T-cell (primary cell): ENCODE measurements at regions of chr3 and their contacts with region 1.

Region 1: DNA sequence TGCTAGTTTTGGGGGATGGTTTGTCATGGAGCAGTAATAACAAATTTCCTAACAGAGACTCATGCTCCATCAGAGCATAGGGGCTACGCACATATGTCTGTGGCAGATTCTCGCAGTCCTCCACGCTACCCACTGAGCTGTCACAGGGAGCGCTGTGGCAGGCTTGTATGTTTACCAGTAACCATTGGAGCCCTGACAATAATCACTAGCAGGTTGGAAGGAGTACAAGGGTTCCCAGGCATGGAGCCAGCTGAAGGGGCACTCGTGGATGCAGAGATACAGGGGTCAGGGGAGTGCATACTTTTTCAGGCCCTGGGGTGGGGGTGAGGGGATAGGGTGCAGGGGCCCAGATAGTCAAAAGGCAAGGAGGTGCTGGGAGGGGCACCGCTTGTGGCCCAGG is 7.9 kb upstream of the GP9 start:
- DNase-seq: no peak
- ATAC-seq: no peak
- H3K4me3 ChIP-seq: no peak overlapping the region
- H3K4me3 Mint-ChIP-seq: peak overlapping the region in 1 of 3 donors; percentile 47
- H3K27ac ChIP-seq: no peak overlapping the region
- H3K27ac Mint-ChIP-seq: no peak overlapping the region
- H3K4me1 ChIP-seq: peaks cover 0 to 5% of the 10 kb centered on the region in 2 experiments
- H3K4me1 Mint-ChIP-seq: peaks cover 5 to 12% (median 11%) of the 10 kb centered on the region in 3 donors
- H3K27me3 ChIP-seq: peaks cover 0 to 3% of the 10 kb centered on the region in 2 experiments
- H3K27me3 Mint-ChIP-seq: no peaks in the 10 kb centered on the region

Region 2: GRCh38 chr3:129016356-129016719 is 36.3 kb before region 1 on chr3:
- CTCF ChIA-PET with region 1: interaction called, 3 to 17 read pairs
- POLR2A ChIA-PET with region 1: no interaction called
- DNase-seq: peak; percentile 42 to 85 (median 62)
- ATAC-seq: peak; percentile 80 to 91 (median 84)
- H3K4me3 ChIP-seq: peak overlapping the region in 1 of 2 donors; percentile 32
- H3K4me3 Mint-ChIP-seq: peak overlapping the region; percentile 50 to 81 (median 72)
- H3K27ac ChIP-seq: peak overlapping the region; percentile 84
- H3K27ac Mint-ChIP-seq: peak overlapping the region; percentile 95 to 99
- H3K4me1 ChIP-seq: peaks cover 26 to 43% of the 10 kb centered on the region in 2 experiments
- H3K4me1 Mint-ChIP-seq: peaks cover 46 to 61% (median 47%) of the 10 kb centered on the region in 3 donors
- H3K27me3 ChIP-seq: no peaks in the 10 kb centered on the region
- H3K27me3 Mint-ChIP-seq: no peaks in the 10 kb centered on the region

Region 3: DNA sequence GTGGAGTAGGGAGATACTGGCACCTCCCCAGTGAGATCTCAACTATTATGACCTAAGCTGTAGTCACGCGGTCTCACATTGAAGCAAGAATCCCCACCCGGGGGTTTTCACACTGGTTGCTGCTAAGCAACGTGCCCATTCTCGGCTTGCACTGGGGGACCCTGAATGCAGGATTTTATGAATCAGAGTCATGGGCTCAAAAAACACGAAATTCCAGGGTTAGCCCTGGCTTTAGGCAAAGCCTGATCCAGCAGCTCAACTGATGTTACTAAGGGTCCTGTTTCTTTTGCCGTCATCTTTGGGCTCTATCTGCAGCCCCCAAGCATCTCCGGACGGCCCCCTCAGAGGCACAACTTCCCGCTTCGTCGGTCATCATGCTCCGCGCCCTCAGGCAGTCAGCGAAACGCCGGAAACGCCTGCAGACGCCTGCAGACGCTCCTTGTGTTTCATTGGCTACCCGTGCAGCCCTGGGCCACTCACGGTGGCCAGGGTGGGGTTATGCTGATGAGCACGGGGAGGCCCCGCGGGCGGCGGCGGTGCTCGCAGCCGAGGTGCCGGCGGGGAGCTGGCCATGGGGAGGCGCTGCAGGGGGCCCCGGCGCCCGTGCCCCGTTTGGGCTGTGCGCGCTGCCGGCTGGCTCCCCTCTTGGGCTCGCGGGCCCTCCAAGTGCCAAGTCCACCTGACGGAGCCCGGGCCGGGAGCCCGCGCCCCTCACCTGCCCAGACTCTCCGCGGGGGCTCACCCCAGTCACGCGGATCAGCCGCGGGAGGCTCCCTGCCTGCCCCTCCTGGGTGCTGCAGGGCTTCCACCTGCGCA is 25.7 kb before region 1 on chr3:
- CTCF ChIA-PET with region 1: interaction called in 1 of 2 experiments, 12 read pairs
- POLR2A ChIA-PET with region 1: interaction called, 4 read pairs
- DNase-seq: peak; percentile 80 to 96 (median 92)
- ATAC-seq: peak; percentile 97 to 100 (median 100)
- H3K4me3 ChIP-seq: peak overlapping the region; percentile 47 to 65
- H3K4me3 Mint-ChIP-seq: peak overlapping the region; percentile 79 to 80 (median 79)
- H3K27ac ChIP-seq: peak overlapping the region; percentile 82
- H3K27ac Mint-ChIP-seq: peak overlapping the region; percentile 94 to 96
- H3K4me1 ChIP-seq: peaks cover 5 to 30% of the 10 kb centered on the region in 2 experiments
- H3K4me1 Mint-ChIP-seq: peaks cover 20 to 29% (median 24%) of the 10 kb centered on the region in 3 donors
- H3K27me3 ChIP-seq: no peaks in the 10 kb centered on the region
- H3K27me3 Mint-ChIP-seq: no peaks in the 10 kb centered on the region

Region 4: GRCh38 chr3:129036222-129037092 is 16.2 kb before region 1 on chr3:
- CTCF ChIA-PET with region 1: interaction called in 1 of 2 experiments, 13 read pairs
- POLR2A ChIA-PET with region 1: interaction called in 1 of 2 experiments, 3 read pairs
- DNase-seq: no peak
- ATAC-seq: peak in 1 of 4 experiments; percentile 21
- H3K4me3 ChIP-seq: no peak overlapping the region
- H3K4me3 Mint-ChIP-seq: no peak overlapping the region
- H3K27ac ChIP-seq: no peak overlapping the region
- H3K27ac Mint-ChIP-seq: peak overlapping the region in 1 of 2 donors; percentile 61
- H3K4me1 ChIP-seq: peaks cover 9 to 25% of the 10 kb centered on the region in 2 experiments
- H3K4me1 Mint-ChIP-seq: peaks cover 19 to 31% (median 21%) of the 10 kb centered on the region in 3 donors
- H3K27me3 ChIP-seq: peaks cover 0 to 27% of the 10 kb centered on the region in 2 experiments
- H3K27me3 Mint-ChIP-seq: peaks cover 6 to 15% of the 10 kb centered on the region in 2 donors

Region 5: DNA sequence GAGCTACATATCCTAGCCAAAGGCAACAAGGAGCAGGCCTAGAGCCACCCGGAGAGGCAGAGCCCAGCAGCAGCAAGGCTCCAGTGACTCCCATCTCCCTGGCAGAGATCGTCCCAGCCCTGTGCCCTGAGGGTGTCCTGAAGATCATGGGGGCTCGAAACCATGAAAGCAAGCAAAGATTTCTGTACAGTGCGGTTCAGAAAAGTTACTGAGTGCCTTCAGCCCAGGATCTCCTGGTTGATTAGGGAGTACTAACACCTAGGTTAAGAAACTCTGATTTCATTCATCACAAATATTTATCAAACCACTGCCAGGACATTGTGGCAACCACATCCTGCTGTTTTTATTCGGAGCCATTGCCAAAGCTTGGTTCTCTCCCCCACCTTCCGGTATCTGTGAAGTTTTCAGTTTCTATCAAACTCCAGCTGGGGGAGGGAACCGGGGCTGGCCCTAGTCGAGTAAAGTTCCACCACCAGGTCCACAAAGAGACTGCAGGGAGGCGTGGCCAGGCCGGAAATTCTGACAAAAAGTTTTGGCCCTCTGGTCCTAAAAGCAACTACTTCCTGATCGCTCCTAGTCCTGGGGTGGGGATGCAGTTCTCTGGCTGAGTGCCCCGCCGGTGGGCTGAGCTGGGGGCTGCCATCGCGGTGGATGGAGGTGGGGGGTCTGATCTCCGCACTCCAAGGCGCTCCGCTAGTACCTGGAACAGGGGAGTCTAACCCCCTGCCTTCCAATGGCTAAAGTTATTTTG is 67.8 kb after region 1 on chr3:
- CTCF ChIA-PET with region 1: interaction called, 6 to 18 read pairs
- POLR2A ChIA-PET with region 1: interaction called, 3 read pairs
- DNase-seq: peak; percentile 79 to 95 (median 91)
- ATAC-seq: peak; percentile 59 to 68 (median 64)
- H3K4me3 ChIP-seq: peak overlapping the region; percentile 97 to 98
- H3K4me3 Mint-ChIP-seq: peak overlapping the region; percentile 83 to 93 (median 90)
- H3K27ac ChIP-seq: peak overlapping the region; percentile 75
- H3K27ac Mint-ChIP-seq: peak overlapping the region; percentile 98 to 99
- H3K4me1 ChIP-seq: peaks cover 31 to 71% of the 10 kb centered on the region in 2 experiments
- H3K4me1 Mint-ChIP-seq: peaks cover 40 to 60% (median 58%) of the 10 kb centered on the region in 3 donors
- H3K27me3 ChIP-seq: no peaks in the 10 kb centered on the region
- H3K27me3 Mint-ChIP-seq: no peaks in the 10 kb centered on the region

Region 6: DNA sequence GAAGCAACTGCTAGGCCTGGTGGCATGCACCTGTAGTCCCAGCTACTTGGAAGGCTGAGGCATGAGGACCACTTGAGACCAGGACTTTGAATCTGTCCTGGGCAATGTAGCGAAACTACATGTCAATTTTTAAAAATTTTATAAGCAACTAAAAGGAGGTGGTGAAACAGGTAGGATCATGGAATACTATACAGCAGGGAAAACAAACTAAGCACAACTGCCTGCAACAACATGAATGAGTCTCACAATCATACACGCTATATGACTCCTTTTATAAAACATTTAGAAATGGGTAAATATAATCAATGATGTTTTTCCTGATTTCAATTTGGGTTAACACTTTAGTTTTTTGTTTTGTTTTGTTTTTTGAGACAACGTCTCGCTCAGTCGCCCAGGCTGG is 160.6 kb after region 1 on chr3:
- CTCF ChIA-PET with region 1: no interaction called
- POLR2A ChIA-PET with region 1: no interaction called
- DNase-seq: no peak
- ATAC-seq: no peak
- H3K4me3 ChIP-seq: no peak overlapping the region
- H3K4me3 Mint-ChIP-seq: no peak overlapping the region
- H3K27ac ChIP-seq: no peak overlapping the region
- H3K27ac Mint-ChIP-seq: no peak overlapping the region
- H3K4me1 ChIP-seq: no peaks in the 10 kb centered on the region
- H3K4me1 Mint-ChIP-seq: no peaks in the 10 kb centered on the region
- H3K27me3 ChIP-seq: peaks cover 0 to 5% of the 10 kb centered on the region in 2 experiments
- H3K27me3 Mint-ChIP-seq: peaks cover 0 to 6% of the 10 kb centered on the region in 2 donors

Region 7: DNA sequence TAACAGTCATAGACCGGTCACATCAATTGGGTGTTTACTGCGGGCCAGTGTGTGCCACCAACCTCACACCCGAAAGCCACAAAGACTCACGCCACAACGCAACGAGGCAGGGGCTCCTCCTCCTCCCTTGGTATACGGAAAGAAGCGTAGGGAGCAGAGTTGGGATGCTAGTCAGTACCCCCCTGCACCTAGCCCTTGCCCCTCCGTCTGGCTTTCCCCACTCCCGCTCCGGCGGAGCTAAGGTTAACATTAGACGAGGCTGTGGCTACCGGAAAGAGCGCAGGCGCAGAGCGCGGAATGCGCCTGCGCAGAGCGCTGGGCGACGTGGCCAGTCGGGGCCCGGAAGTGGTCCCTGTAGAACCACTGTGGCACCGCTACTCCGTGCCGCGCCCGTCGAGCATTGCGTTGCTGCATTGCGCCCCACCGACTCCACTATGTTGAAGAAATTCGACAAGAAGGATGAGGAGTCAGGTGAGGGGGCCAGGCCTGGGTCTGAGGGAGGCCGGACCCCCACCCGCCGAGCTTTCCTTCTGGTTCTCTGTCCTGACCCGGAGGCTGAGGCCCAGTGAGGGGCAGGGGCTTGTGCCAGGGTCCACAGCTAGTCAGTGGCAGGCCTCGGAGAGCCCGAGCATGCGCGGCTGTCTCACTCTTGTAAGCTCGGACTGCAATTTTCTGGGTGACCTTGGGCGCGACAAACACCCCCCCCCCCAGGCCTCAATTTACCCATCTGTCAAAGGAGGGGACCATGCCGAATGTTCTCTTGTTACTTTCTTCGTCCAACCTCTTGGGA is 196.8 kb after region 1 on chr3 and contains the start of gene COPG1:
- CTCF ChIA-PET with region 1: interaction called, 38 read pairs
- POLR2A ChIA-PET with region 1: interaction called in 1 of 2 experiments, 6 read pairs
- DNase-seq: peak; percentile 71 to 93 (median 82)
- ATAC-seq: peak; percentile 86 to 91 (median 90)
- H3K4me3 ChIP-seq: peak within 1 kb of the TSS; percentile 65 to 94
- H3K4me3 Mint-ChIP-seq: peak within 1 kb of the TSS; percentile 89 to 93 (median 92)
- H3K27ac ChIP-seq: peak within 1 kb of the TSS; percentile 50
- H3K27ac Mint-ChIP-seq: peak within 1 kb of the TSS; percentile 92 to 95
- H3K4me1 ChIP-seq: peaks cover 9 to 41% of the 10 kb centered on the region in 2 experiments
- H3K4me1 Mint-ChIP-seq: peaks cover 49 to 57% (median 50%) of the 10 kb centered on the region in 3 donors
- H3K27me3 ChIP-seq: no peaks in the 10 kb centered on the region
- H3K27me3 Mint-ChIP-seq: no peaks in the 10 kb centered on the region
- total RNA-seq, gene COPG1: 96.0 to 139 (median 116) TPM

Region 8: DNA sequence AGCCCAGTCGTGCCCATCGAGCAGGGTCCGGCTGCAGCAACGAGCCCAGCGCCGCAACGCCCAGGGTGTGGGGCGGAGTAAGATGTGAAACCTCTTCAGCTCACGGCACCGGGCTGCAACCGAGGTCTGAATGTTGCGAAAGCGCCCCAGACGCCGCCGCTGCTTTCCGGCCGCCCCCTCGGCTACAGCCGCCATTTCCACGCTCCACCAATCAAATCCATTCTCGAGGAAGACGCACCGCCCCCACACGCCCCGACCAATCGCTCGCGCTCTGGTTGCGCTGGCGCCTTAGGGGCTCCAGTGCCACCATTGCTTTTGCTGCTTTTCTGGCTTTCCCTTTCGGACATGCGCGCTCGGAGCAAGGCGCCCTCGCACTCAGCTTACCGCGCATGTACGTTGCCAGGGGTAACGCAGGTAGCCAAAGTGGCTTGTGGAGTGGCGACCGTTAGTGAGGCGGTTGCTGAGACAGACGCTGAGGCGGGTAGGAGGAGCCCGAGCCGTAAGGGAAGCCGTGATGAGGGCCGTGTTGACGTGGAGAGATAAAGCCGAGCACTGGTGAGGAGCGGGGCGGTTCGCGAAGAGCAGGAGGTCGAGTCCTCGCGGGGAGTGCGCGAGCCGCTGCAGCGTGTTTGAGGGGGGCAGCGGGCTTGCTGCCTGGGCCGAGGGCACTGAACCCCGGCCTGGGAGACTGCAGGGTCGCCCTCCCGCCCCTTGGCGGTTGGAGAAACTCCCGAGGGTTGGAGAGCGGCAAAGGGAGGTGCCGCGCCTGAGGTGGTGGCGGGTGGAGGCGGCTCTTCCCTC is 387.3 kb after region 1 on chr3 and contains the starts of genes IFT122 and MBD4:
- CTCF ChIA-PET with region 1: no interaction called
- POLR2A ChIA-PET with region 1: no interaction called
- DNase-seq: peak; percentile 97 to 100 (median 99)
- ATAC-seq: peak; percentile 87 to 90 (median 88)
- H3K4me3 ChIP-seq: peak within 1 kb of the TSS; percentile 89 to 97
- H3K4me3 Mint-ChIP-seq: peak within 1 kb of the TSS; percentile 83 to 92 (median 85)
- H3K27ac ChIP-seq: peak within 1 kb of the TSS; percentile 86
- H3K27ac Mint-ChIP-seq: peak within 1 kb of the TSS; percentile 94 to 96
- H3K4me1 ChIP-seq: peaks cover 18 to 26% of the 10 kb centered on the region in 2 experiments
- H3K4me1 Mint-ChIP-seq: peaks cover 72 to 84% (median 73%) of the 10 kb centered on the region in 3 donors
- H3K27me3 ChIP-seq: no peaks in the 10 kb centered on the region
- H3K27me3 Mint-ChIP-seq: no peaks in the 10 kb centered on the region
- total RNA-seq, gene IFT122: 15.0 to 23.9 (median 18.1) TPM
- total RNA-seq, gene MBD4: 43.1 to 59.4 (median 45.2) TPM